ENCODE measurements at regions of chr5 and their contacts with region 1.

Region 1: DNA sequence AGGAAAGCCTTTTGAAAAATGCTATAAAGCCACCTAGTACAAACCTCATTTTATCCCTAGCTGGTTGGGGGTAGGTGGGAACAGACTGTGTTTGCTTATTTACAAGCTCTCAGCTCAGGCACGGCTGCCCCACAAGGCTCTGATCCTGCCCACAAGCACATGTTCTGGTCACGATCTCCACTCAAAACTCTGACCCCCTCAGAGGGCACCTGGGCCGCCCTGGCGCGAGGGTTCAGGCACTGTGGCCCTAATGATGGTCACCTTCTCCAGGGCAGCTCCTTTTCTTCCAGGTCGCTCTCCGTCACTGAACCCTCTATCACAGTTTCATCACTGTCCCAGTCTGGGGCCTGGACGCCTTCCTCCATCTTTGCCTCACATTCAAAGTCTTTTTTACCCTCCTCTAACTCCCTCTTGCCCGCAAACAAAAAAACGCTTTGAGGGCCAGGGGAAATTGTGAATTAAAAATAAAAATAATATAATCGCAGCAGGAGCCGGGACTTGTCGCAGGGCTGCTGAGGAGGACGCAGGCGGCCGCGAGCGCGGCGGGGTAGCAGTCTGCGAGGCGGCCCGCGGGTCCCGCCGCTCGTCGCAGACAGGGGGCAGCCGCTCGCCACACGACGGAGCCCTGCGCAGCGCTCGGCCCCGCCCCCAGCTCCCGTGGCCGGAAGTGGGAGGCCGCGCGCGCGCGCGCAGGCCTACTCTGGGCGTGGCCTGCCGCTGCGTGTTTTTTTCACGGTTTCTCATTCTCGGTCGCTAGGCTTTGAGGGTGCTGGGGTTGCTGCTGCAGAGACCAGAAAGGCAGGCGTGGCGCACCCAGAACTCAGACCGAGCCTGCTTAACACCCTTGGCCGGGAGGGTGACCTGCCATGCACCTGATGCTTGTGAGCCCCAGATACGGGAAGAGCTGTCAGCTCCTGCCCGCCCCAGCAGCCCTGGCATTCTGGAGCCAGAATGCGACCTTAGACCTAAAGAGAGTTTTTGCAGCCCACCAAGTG is at the start of gene ANKRD31:
- DNase-seq: peak; percentile 66
- ATAC-seq: peak; percentile 100
- H3K4me3 ChIP-seq: peak within 1 kb of the TSS; percentile 87
- H3K27ac ChIP-seq: peak within 1 kb of the TSS; percentile 52
- H3K4me1 ChIP-seq: peaks cover 3% of the 10 kb centered on the region
- H3K27me3 ChIP-seq: no peaks in the 10 kb centered on the region
- CTCF ChIP-seq: peak; percentile 83
- POLR2A ChIP-seq: peak; percentile 46; the same call in 1 of the 2 replicates
- RAD21 ChIP-seq: peak; percentile 76
- total RNA-seq, gene ANKRD31: under 0.01 TPM in 2 replicates

Region 2: DNA sequence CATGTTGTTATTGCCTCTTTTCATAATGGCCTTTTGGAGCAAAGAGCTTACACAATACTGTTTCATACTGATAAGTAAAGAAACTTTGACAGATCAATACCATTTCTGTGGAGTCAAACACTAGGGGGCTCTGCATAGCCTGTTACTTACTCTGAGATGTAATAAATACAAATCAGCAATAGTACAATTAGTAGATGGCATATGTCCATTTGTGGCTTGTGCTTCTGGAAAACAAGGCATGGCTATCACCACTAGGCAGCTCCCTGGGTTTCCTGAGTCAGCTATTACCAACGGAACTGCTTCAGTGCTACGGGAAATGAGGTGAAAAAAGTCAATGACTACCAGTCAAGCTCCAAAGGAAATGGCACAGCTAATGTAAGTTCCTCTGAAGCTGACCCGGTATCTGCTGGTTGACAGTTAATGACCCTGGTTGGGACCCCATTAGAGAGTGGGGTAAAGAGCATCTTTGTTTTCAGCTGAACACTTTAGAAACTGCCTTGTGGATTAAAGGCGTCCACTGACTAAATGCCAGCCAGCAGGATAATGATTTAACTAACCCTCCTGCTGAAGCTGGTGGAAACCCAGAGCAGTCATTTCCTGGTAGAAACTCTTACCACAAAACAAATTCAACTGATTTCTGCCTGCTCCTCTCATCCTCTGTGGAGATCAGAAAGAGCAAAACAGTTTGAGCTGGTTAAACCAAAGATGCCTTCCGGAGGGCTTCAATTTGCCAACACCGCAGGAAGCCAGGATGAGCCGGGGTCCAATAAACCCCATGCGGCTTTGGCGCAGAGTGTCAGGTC is 301.5 kb before region 1 on chr5:
- CTCF ChIA-PET with region 1: interaction called, 3 read pairs
- POLR2A ChIA-PET with region 1: no interaction called
- dilution Hi-C with region 1: no loop called
- in situ Hi-C with region 1: no loop called
- intact Hi-C with region 1: loop called (anchors 10 kb)
- DNase-seq: peak; percentile 50
- ATAC-seq: peak; percentile 72
- H3K4me3 ChIP-seq: no peak overlapping the region
- H3K27ac ChIP-seq: no peak overlapping the region
- H3K4me1 ChIP-seq: no peaks in the 10 kb centered on the region
- H3K27me3 ChIP-seq: no peaks in the 10 kb centered on the region
- CTCF ChIP-seq: peak; percentile 38
- POLR2A ChIP-seq: no peak
- RAD21 ChIP-seq: peak; percentile 31; the same call in 1 of the 2 replicates

Region 3: DNA sequence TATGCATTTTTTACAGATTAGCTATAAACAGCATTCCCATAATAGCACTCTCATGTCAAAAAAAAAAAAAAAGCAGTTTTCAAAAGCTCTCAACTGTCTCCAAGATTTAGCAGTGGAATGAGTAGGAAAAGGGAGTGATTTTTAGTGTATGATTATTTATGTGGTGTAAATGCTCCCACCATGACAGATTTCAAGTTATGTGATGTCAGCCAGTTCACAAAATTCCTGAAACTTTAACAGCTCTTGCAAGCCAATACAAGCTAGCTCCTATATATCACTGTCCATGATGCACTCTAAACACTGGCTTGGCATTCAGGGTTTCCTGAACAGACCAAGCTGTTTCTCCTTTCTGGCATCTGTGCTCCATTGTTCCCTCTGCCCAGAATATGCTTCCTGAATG is 366.8 kb after region 1 on chr5:
- CTCF ChIA-PET with region 1: no interaction called
- POLR2A ChIA-PET with region 1: no interaction called
- dilution Hi-C with region 1: no loop called
- in situ Hi-C with region 1: no loop called
- intact Hi-C with region 1: loop called (anchors 10 kb)
- DNase-seq: peak; percentile 88
- ATAC-seq: peak; percentile 53
- H3K4me3 ChIP-seq: no peak overlapping the region
- H3K27ac ChIP-seq: no peak overlapping the region
- H3K4me1 ChIP-seq: peaks cover 13% of the 10 kb centered on the region
- H3K27me3 ChIP-seq: no peaks in the 10 kb centered on the region
- CTCF ChIP-seq: no peak
- POLR2A ChIP-seq: no peak
- RAD21 ChIP-seq: no peak

Region 4: GRCh38 chr5:76175051-76175666 is 938.5 kb after region 1 on chr5:
- CTCF ChIA-PET with region 1: no interaction called
- POLR2A ChIA-PET with region 1: no interaction called
- dilution Hi-C with region 1: no loop called
- in situ Hi-C with region 1: no loop called
- intact Hi-C with region 1: loop called (anchors 1 kb)
- DNase-seq: peak; percentile 48
- ATAC-seq: peak; percentile 63
- H3K4me3 ChIP-seq: no peak overlapping the region
- H3K27ac ChIP-seq: no peak overlapping the region
- H3K4me1 ChIP-seq: no peaks in the 10 kb centered on the region
- H3K27me3 ChIP-seq: no peaks in the 10 kb centered on the region
- CTCF ChIP-seq: peak; percentile 65
- POLR2A ChIP-seq: no peak
- RAD21 ChIP-seq: peak; percentile 57

Region 5: DNA sequence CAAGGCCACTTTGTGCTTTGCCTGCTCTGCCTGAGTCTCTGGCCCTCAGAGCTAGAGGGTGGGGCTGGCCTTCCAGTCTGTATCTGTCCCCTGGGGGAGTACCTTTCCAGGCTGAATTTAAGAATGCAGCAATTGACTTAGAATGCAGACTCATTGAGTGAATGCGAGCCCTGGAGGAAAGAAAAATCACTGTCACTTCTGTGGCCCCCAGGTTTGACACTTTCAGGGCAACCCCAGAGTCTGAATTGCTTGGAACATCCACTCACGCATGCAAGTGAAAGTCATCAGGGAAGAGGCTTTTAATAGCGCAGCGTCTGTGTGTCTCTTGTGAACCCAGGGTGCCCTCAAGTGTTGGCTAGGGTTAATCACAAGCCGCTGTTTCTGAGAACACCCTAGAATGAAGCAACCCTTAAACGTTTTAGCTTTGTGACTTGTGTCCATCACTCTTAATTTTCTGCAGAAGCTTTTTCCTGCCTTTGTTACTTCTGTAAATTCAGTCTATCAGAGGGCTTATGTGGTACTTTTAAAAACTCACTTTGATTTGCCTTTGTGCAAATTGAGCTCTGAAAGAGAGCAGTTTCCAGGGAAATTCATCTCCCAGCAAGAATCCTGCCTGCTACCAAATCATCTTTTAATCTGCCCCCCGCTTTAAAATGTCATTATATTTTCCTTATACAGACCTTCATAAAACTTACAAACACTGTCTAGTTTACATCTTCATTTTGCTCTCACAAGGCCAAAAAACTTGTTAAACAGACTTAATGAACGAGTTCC is 1019.7 kb after region 1 on chr5:
- CTCF ChIA-PET with region 1: no interaction called
- POLR2A ChIA-PET with region 1: no interaction called
- dilution Hi-C with region 1: no loop called
- in situ Hi-C with region 1: no loop called
- intact Hi-C with region 1: loop called (anchors 5 kb)
- DNase-seq: peak; percentile 66
- ATAC-seq: peak; percentile 100
- H3K4me3 ChIP-seq: no peak overlapping the region
- H3K27ac ChIP-seq: no peak overlapping the region
- H3K4me1 ChIP-seq: no peaks in the 10 kb centered on the region
- H3K27me3 ChIP-seq: peaks cover 2% of the 10 kb centered on the region; the same call in 1 of the 2 replicates
- CTCF ChIP-seq: peak; percentile 65
- POLR2A ChIP-seq: no peak
- RAD21 ChIP-seq: peak; percentile 74

Measured in IMR-90 (cell line).